ENCODE measurements at regions of chr4 and their contacts with region 1.

Region 1: DNA sequence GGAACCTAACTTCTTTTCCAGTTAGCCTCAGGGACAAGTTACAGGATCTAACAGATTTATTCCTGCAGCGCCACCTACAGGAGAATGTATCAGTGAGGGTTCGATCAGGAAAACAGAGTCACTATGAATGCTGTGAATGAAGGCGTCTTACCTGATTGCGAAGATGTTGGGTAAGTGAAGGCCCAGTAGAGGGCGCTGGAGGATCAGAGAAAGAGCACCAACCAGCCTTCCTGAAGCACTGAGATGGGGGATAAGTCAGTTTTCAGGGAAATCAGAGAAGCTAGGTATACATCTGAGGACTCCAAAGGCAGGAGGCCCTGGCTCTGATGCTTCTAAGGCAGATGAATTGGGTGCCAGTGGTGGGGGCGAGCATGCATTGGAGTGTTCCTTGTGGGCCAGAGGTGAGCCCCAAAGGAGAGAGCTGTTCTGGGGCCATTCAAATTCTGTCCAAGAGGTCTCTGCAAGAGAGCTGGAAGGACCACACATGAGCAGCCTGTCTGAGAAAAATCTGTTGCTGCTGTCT is 169.9 kb upstream of the AADAT start:
- DNase-seq: peak; percentile 83 to 90 (median 87)
- H3K4me3 ChIP-seq: no peak overlapping the region
- H3K27ac ChIP-seq: no peak overlapping the region
- H3K4me1 ChIP-seq: no peaks in the 10 kb centered on the region
- H3K27me3 ChIP-seq: peaks cover 0 to 2% (median 0%) of the 10 kb centered on the region in 5 experiments

Region 2: GRCh38 chr4:170122252-170122651 is 137.4 kb before region 1 on chr4:
- CTCF ChIA-PET with region 1: no interaction called
- POLR2A ChIA-PET with region 1: no interaction called
- DNase-seq: peak in 1 of 3 donors; percentile 6
- H3K4me3 ChIP-seq: no peak overlapping the region
- H3K27ac ChIP-seq: no peak overlapping the region
- H3K4me1 ChIP-seq: peaks cover 10 to 40% (median 29%) of the 10 kb centered on the region in 4 experiments
- H3K27me3 ChIP-seq: no peaks in the 10 kb centered on the region

Region 3: GRCh38 chr4:170242471-170242870 is 17.2 kb before region 1 on chr4:
- CTCF ChIA-PET with region 1: interaction called, 26 read pairs
- POLR2A ChIA-PET with region 1: no interaction called
- DNase-seq: no peak
- H3K4me3 ChIP-seq: no peak overlapping the region
- H3K27ac ChIP-seq: no peak overlapping the region
- H3K4me1 ChIP-seq: no peaks in the 10 kb centered on the region
- H3K27me3 ChIP-seq: no peaks in the 10 kb centered on the region

Region 4: DNA sequence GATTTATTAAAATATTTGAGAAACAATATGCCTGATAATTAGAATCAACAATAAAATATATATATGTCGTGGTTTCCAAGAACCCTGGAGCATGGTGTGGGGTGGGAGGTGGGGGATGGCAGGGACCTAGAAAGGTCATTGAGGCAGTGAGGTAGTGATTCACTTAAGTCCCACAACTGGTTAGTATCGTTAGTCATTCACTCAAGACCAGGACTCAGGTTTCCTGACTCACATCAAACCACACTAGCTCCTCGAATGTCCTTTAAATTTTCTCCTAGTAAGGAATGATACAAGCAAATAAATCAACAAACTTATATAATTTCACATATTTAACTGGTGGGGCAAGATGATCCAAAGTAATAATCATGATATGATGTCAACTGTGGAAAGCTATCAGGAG is 11.1 kb before region 1 on chr4:
- CTCF ChIA-PET with region 1: interaction called, 26 read pairs
- POLR2A ChIA-PET with region 1: no interaction called
- DNase-seq: no peak
- H3K4me3 ChIP-seq: no peak overlapping the region
- H3K27ac ChIP-seq: no peak overlapping the region
- H3K4me1 ChIP-seq: no peaks in the 10 kb centered on the region
- H3K27me3 ChIP-seq: no peaks in the 10 kb centered on the region

Region 5: GRCh38 chr4:170270628-170271027 is 10.9 kb after region 1 on chr4:
- CTCF ChIA-PET with region 1: interaction called, 26 read pairs
- POLR2A ChIA-PET with region 1: no interaction called
- DNase-seq: no peak
- H3K4me3 ChIP-seq: no peak overlapping the region
- H3K27ac ChIP-seq: no peak overlapping the region
- H3K4me1 ChIP-seq: no peaks in the 10 kb centered on the region
- H3K27me3 ChIP-seq: no peaks in the 10 kb centered on the region

Region 6: GRCh38 chr4:170374770-170375169 is 115.1 kb after region 1 on chr4:
- CTCF ChIA-PET with region 1: interaction called, 10 read pairs
- POLR2A ChIA-PET with region 1: no interaction called
- DNase-seq: peak; percentile 19 to 52 (median 47)
- H3K4me3 ChIP-seq: no peak overlapping the region
- H3K27ac ChIP-seq: no peak overlapping the region
- H3K4me1 ChIP-seq: no peaks in the 10 kb centered on the region
- H3K27me3 ChIP-seq: no peaks in the 10 kb centered on the region

Region 7: GRCh38 chr4:170420254-170420693 is 160.6 kb after region 1 on chr4:
- CTCF ChIA-PET with region 1: no interaction called
- POLR2A ChIA-PET with region 1: no interaction called
- DNase-seq: no peak
- H3K4me3 ChIP-seq: no peak overlapping the region
- H3K27ac ChIP-seq: no peak overlapping the region
- H3K4me1 ChIP-seq: no peaks in the 10 kb centered on the region
- H3K27me3 ChIP-seq: no peaks in the 10 kb centered on the region

Region 8: GRCh38 chr4:170853422-170854021 is 593.8 kb after region 1 on chr4:
- CTCF ChIA-PET with region 1: interaction called, 18 read pairs
- POLR2A ChIA-PET with region 1: no interaction called
- DNase-seq: peak; percentile 47 to 66 (median 59)
- H3K4me3 ChIP-seq: no peak overlapping the region
- H3K27ac ChIP-seq: no peak overlapping the region
- H3K4me1 ChIP-seq: no peaks in the 10 kb centered on the region
- H3K27me3 ChIP-seq: no peaks in the 10 kb centered on the region

Measured in common myeloid progenitor, CD34-positive (primary cell).